ENCODE measurements at regions of chr12 and their contacts with region 1.

Region 1: DNA sequence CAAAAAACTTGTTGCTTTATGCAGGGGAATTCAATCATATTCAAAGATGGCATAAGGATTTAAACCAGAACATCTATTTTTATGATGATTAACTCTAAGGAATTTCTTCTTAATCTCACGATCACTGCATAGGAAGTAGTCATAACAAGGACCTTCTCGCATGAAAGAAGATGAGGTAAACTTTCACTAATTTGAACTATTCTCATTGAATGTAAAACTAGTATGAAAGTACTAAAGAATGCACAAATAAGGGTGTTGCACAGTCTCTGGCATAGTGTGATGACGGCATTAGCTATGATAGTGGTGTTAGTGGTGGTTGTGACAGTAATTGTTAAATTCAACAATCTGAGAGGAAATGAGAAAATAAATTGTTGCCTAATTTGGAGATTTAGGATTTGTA is 280.0 kb downstream of the SLC6A15 start:
- DNase-seq: no peak
- H3K4me3 ChIP-seq: no peak overlapping the region
- H3K27ac ChIP-seq: no peak overlapping the region
- H3K4me1 ChIP-seq: no peaks in the 10 kb centered on the region
- H3K27me3 ChIP-seq: no peaks in the 10 kb centered on the region
- CTCF ChIP-seq: no peak

Region 2: DNA sequence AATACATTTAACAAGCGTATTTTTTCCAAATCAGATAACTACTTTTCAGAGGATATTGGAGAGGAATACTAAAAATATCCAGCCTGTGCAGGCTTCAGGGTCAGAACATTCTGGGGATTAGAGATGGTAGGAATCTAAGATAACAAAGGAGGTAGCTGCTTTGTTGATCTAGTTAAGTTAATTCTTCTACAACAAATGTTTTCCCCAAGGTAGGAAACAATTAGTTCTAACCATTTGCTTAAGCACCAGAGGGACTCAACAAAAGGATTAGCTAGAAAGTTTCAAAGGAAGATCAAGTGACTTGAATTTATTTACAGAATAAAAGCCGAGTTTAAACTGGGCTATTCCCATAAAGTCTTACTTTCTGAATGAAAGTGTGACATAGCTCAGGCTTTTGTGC is 1421.6 kb before region 1 on chr12:
- CTCF ChIA-PET with region 1: interaction called, 10 read pairs
- dilution Hi-C with region 1: no loop called
- in situ Hi-C with region 1: no loop called
- intact Hi-C with region 1: no loop called
- DNase-seq: no peak
- H3K4me3 ChIP-seq: no peak overlapping the region
- H3K27ac ChIP-seq: no peak overlapping the region
- H3K4me1 ChIP-seq: no peaks in the 10 kb centered on the region
- H3K27me3 ChIP-seq: no peaks in the 10 kb centered on the region
- CTCF ChIP-seq: no peak